Right ventricle myocardium inferior (tissue), 1 donor: ENCODE measurements at regions of chr6 and their contacts with region 1.

Region 1: DNA sequence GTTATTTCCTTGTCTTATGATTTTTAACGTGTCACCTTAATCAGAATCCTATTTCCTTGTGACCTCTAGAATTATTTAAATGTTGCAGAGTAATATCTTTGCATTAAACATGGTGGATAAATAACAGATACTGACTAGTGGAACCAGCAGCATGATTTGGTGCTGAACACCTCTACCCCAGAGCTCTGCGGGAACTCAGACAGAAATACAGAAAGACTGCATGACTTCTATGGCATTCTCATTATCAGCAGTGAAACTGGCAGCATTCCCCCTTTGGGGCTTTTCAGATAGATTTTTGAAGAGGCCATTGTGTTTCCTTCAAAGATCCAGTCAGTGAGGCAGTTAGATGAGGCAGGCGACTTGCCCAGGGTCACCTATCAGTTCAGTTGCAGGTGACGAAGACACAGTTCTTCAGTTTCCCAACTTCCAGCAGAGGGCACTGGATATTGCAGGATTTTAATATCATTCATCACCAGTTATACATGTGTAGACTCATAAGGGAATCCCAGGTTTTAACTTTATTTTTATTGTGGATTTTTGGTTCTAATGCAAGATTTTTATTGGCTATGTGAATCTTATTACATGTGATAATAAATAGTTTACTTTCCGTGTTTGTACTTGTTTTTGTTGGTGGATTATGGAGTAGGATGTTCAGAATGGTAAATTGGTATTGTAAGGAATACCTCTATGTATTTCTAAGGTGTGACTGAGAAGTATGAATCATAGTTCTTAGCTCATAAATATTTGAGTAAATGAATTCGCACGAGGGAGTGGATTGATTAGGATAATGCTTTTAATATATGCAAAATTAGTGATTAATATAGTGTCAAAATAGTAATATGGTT is 81.3 kb downstream of the AFDN start:
- DNase-seq: no peak
- ATAC-seq: no peak

Region 2: DNA sequence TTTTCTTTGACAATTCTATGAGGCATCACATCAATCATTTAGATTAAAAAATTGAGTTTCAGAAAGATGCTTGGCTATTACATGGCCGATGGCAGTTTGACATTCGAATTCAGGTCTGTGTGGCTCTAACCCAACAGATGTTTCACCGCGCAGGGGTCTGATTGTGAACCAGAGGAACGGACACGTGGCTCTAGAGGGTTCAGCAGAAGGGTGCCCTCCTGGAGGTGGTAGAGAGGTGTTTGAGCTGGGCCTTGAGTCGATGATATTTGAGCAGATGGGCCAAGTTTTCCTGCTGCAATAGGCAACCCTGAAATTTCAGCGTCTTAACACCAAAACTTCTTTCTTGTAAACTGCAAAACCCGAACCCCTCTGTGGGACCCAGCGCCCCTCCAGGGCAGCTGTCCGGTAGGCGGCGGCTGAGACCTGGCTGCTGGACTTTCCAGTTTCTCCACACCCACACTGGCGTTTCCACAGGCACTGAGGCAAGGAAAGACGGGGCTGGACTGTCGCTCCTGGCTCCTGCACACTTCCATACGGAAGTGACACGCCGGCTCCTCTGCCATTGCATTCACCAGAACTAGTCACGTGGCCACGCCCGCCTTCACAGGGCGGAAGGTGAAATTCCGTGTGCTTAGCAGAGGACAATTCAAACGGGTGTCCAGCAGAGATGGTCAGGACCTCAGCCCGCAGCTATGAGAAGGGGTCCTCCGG is 92.6 kb before region 1 on chr6:
- intact Hi-C with region 1: no loop called
- DNase-seq: peak; percentile 65
- ATAC-seq: no peak

Region 3: DNA sequence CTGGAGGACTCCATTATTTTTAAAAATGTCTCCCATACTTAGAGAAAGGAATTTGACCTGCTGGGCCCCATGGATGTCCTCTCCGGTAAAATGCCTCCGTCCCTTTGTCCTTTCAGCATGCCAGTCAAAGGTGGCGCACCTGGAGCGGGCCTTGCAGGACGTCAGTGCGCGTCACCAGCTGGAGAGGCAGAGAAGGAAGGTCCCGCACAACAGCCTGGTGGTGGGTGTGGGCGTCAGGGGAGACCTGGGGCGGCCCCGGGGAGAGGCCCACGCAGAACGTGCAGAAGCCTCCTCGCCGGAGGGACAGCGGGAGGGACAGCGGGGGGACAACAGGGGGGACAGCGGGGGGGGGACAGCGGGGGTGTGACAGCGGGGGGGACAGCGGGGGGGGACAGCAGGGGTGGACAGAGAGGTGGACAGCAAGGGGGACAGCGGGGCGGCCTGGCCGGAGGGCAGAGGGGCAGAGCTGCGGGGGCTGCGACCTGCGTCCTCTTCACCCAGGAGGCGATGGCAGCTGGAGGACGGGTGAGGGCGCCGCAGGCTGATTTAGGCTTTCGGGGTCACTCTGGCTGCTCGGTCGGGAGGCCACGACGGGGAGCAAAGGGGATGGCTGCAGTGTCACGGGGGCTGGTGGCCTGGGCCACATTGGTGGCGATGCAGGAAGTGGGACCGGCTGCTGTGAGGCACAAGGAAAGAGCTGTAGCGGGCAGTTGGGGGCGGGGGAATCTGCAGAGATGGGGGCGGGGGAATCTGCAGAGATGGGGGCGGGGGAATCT is 88.6 kb after region 1 on chr6:
- intact Hi-C with region 1: no loop called
- DNase-seq: no peak
- ATAC-seq: no peak

Region 4: DNA sequence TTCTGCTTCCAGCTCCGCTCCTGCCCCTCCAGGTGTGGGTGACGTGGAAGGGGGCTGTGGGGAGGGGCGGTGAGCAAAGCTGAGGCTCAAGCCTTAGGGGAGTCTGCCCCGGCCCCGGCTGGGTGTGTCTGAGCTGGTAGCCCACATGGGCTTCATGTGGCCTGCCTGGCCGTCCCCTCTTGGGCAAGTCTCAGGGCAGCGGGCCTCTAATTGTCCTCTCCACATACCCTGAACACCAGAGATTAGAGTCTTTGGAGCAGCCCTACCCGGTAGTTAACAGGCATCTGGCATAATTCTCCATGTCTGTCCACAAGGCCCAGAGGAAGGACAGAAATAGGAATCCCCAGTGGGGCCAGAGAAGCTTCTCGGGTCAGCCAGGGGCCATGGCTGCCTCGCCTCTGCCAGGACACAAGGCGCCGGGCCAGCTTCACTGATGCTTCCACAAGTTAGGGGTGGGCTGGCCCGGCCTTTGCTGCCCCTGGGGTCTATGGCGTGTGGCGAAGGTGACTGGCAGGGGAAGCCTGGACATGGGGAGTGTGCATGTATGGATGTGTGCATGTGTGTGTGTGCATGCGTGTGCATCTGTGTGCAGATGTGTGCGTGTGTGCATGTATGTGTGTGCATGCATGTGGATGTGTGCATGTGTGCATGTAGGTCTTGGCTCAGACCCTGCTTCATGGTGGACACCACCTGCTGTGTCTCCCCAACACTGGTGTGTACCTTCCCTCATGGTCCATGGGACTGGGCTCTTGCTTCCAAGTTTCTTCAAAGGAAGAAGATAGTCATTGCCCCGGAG is 146.9 kb after region 1 on chr6:
- intact Hi-C with region 1: loop called (anchors 5 kb)
- DNase-seq: peak; percentile 87
- ATAC-seq: peak; percentile 87

Region 5: GRCh38 chr6:168117942-168118341 is 209.9 kb after region 1 on chr6:
- intact Hi-C with region 1: loop called (anchors 5 kb)
- DNase-seq: no peak
- ATAC-seq: no peak

Region 6: GRCh38 chr6:168132531-168133167 is 224.6 kb after region 1 on chr6:
- intact Hi-C with region 1: loop called (anchors 2 kb)
- DNase-seq: peak; percentile 78
- ATAC-seq: peak; percentile 85